ENCODE measurements at regions of chr5 and their contacts with region 1.

Region 1: GRCh38 chr5:92860061-92860460 is 721.0 kb downstream of the NR2F1-AS1 start:
- DNase-seq: no peak
- H3K4me3 ChIP-seq: no peak overlapping the region
- H3K27ac ChIP-seq: no peak overlapping the region
- H3K4me1 ChIP-seq: no peaks in the 10 kb centered on the region
- H3K27me3 ChIP-seq: no peaks in the 10 kb centered on the region
- CTCF ChIP-seq: no peak

Region 2: GRCh38 chr5:92081958-92082712 is 777.9 kb before region 1 on chr5:
- CTCF ChIA-PET with region 1: no interaction called
- POLR2A ChIA-PET with region 1: no interaction called
- intact Hi-C with region 1: no loop called
- DNase-seq: no peak
- H3K4me3 ChIP-seq: peak overlapping the region; percentile 18; the same call in 1 of the 2 replicates
- H3K27ac ChIP-seq: no peak overlapping the region
- H3K4me1 ChIP-seq: no peaks in the 10 kb centered on the region
- H3K27me3 ChIP-seq: no peaks in the 10 kb centered on the region
- CTCF ChIP-seq: no peak

Region 3: DNA sequence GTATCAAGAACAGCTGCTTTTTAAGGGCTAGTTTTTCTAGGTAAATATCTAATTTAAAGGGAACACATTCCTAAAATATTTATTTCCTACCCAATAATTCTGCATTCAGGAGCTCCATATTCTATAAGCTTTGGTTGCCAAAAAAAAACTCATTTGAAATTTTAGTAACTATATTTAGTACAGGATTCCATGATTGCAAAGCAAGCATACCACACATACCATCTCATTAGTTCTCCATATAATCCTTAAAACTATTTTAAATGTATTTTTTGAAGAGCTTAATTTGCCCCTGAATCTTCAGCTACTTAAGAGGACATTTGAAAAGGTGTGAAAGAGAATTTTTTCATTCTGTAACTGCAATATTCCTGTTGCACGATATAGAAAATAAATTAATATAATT is 156.1 kb before region 1 on chr5:
- CTCF ChIA-PET with region 1: interaction called, 13 read pairs
- POLR2A ChIA-PET with region 1: no interaction called
- intact Hi-C with region 1: no loop called
- DNase-seq: no peak
- H3K4me3 ChIP-seq: no peak overlapping the region
- H3K27ac ChIP-seq: no peak overlapping the region
- H3K4me1 ChIP-seq: no peaks in the 10 kb centered on the region
- H3K27me3 ChIP-seq: no peaks in the 10 kb centered on the region
- CTCF ChIP-seq: no peak